CD4-positive, alpha-beta memory T cell (primary cell): ENCODE measurements at regions of chr6 and their contacts with region 1.

Region 1: GRCh38 chr6:25788305-25788922 is 33.9 kb downstream of the SLC17A4 start:
- DNase-seq: peak; percentile 11 to 40 (median 37)
- H3K4me3 ChIP-seq: no peak overlapping the region
- H3K4me3 Mint-ChIP-seq: no peak overlapping the region
- H3K27ac ChIP-seq: no peak overlapping the region
- H3K27ac Mint-ChIP-seq: no peak overlapping the region
- H3K4me1 ChIP-seq: no peaks in the 10 kb centered on the region
- H3K4me1 Mint-ChIP-seq: peaks cover 0 to 3% (median 0%) of the 10 kb centered on the region in 4 donors
- H3K27me3 ChIP-seq: no peaks in the 10 kb centered on the region
- H3K27me3 Mint-ChIP-seq: peaks cover 0 to under 1% of the 10 kb centered on the region in 2 donors

Region 2: GRCh38 chr6:25564943-25565342 is 223.5 kb before region 1 on chr6:
- CTCF ChIA-PET with region 1: no interaction called
- POLR2A ChIA-PET with region 1: no interaction called
- intact Hi-C with region 1: no loop called
- DNase-seq: no peak
- H3K4me3 ChIP-seq: no peak overlapping the region
- H3K4me3 Mint-ChIP-seq: no peak overlapping the region
- H3K27ac ChIP-seq: no peak overlapping the region
- H3K27ac Mint-ChIP-seq: no peak overlapping the region
- H3K4me1 ChIP-seq: no peaks in the 10 kb centered on the region
- H3K4me1 Mint-ChIP-seq: no peaks in the 10 kb centered on the region
- H3K27me3 ChIP-seq: no peaks in the 10 kb centered on the region
- H3K27me3 Mint-ChIP-seq: no peaks in the 10 kb centered on the region

Region 3: GRCh38 chr6:25874822-25875562 is 86.6 kb after region 1 on chr6:
- CTCF ChIA-PET with region 1: interaction called, 84 read pairs
- POLR2A ChIA-PET with region 1: no interaction called
- intact Hi-C with region 1: no loop called
- DNase-seq: peak in 4 of 5 donors; percentile 19 to 33 (median 29)
- H3K4me3 ChIP-seq: no peak overlapping the region
- H3K4me3 Mint-ChIP-seq: peak overlapping the region in 6 of 8 donors; percentile 5 to 44 (median 26)
- H3K27ac ChIP-seq: no peak overlapping the region
- H3K27ac Mint-ChIP-seq: peak overlapping the region in 6 of 7 donors; percentile 0 to 86 (median 74)
- H3K4me1 ChIP-seq: peaks cover 35% of the 10 kb centered on the region
- H3K4me1 Mint-ChIP-seq: peaks cover 19 to 44% (median 35%) of the 10 kb centered on the region in 4 donors
- H3K27me3 ChIP-seq: no peaks in the 10 kb centered on the region
- H3K27me3 Mint-ChIP-seq: no peaks in the 10 kb centered on the region

Region 4: DNA sequence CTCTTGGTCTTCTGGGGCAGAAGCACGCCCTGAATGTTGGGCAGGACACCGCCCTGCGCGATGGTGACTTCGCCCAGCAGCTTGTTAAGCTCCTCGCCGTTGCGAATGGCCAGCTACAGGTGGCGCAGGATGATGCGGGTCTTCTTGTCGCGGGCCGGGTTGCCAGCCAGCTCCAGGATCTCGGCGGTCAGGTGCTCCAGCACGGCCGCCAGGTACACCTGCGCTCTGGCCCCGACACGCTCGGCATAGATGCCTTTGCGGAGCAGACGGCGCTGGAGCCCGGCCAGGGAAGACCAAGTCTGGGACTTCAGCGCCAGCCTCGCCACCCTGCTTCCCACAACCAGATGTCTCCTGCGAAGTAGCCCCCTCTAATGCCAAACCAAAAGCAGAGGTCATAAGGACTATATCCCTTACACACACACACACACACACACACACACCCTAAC is 93.7 kb after region 1 on chr6:
- CTCF ChIA-PET with region 1: interaction called, 84 read pairs
- POLR2A ChIA-PET with region 1: interaction called, 3 read pairs
- intact Hi-C with region 1: loop called (anchors 1 kb)
- DNase-seq: peak in 3 of 5 donors; percentile 45 to 73 (median 63)
- H3K4me3 ChIP-seq: peak overlapping the region in 1 of 2 donors; percentile 44
- H3K4me3 Mint-ChIP-seq: peak overlapping the region in 5 of 8 donors; percentile 86 to 94 (median 90)
- H3K27ac ChIP-seq: peak overlapping the region; percentile 31
- H3K27ac Mint-ChIP-seq: peak overlapping the region in 5 of 7 donors; percentile 63 to 97 (median 91)
- H3K4me1 ChIP-seq: no peaks in the 10 kb centered on the region
- H3K4me1 Mint-ChIP-seq: peaks cover under 1 to 8% (median 4%) of the 10 kb centered on the region in 4 donors
- H3K27me3 ChIP-seq: no peaks in the 10 kb centered on the region
- H3K27me3 Mint-ChIP-seq: peaks cover 0 to 2% of the 10 kb centered on the region in 2 donors

Region 5: DNA sequence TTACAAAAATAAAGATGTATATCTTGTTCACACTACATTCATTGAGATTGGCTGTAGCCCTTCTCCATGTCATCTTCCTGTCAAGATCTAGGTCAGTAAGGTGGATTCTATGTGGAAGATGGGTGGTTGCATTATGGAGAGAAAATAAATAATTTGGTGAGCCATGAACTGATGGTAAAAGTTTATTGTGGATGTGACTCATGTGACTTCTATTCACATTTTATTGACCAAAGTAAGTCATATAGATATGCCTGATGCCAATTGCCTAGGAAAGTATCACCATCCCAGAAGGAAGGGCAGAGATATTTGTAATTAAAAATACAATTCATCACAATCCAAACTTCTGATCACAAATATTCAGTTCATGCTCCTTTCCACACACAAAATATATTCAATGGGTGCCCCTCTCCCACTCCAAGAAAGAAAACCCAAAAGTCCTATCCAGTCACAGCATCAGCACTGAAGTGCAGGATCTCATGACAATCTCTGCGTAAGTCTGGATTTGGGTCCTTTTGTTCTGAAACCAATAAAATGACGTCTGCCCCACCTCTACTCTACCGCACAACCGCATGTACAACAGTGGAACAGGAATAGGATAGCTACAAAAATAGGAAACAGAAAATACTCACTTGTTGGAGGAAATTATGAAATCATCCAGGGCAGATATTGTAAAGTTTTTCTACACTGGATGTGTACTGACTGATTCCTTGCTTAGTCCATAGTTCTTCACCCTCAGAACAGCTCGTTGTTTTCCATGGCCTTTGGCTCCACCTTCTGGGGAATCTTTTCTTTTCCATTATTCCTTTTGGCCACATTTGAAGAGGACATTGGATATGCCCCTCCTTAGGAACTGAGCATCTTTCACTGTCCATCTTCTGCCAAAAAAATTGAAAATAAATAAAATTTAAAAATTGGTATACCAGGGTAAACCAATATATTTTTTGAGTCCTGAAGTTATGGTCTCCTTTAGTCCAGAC is 101.8 kb after region 1 on chr6:
- CTCF ChIA-PET with region 1: interaction called, 12 read pairs
- POLR2A ChIA-PET with region 1: no interaction called
- intact Hi-C with region 1: loop called (anchors 1 kb)
- DNase-seq: peak in 4 of 5 donors; percentile 34 to 42 (median 40)
- H3K4me3 ChIP-seq: no peak overlapping the region
- H3K4me3 Mint-ChIP-seq: no peak overlapping the region
- H3K27ac ChIP-seq: no peak overlapping the region
- H3K27ac Mint-ChIP-seq: peak overlapping the region in 1 of 7 donors; percentile 43
- H3K4me1 ChIP-seq: no peaks in the 10 kb centered on the region
- H3K4me1 Mint-ChIP-seq: no peaks in the 10 kb centered on the region
- H3K27me3 ChIP-seq: no peaks in the 10 kb centered on the region
- H3K27me3 Mint-ChIP-seq: peaks cover 0 to 2% of the 10 kb centered on the region in 2 donors

Region 6: GRCh38 chr6:25942561-25943147 is 154.2 kb after region 1 on chr6:
- CTCF ChIA-PET with region 1: interaction called, 8 read pairs
- POLR2A ChIA-PET with region 1: no interaction called
- intact Hi-C with region 1: loop called (anchors 1 kb)
- DNase-seq: peak in 4 of 5 donors; percentile 27 to 40 (median 32)
- H3K4me3 ChIP-seq: no peak overlapping the region
- H3K4me3 Mint-ChIP-seq: no peak overlapping the region
- H3K27ac ChIP-seq: no peak overlapping the region
- H3K27ac Mint-ChIP-seq: no peak overlapping the region
- H3K4me1 ChIP-seq: peaks cover 9% of the 10 kb centered on the region
- H3K4me1 Mint-ChIP-seq: peaks cover 8 to 21% (median 15%) of the 10 kb centered on the region in 4 donors
- H3K27me3 ChIP-seq: no peaks in the 10 kb centered on the region
- H3K27me3 Mint-ChIP-seq: peaks cover 0 to 2% of the 10 kb centered on the region in 2 donors

Region 7: DNA sequence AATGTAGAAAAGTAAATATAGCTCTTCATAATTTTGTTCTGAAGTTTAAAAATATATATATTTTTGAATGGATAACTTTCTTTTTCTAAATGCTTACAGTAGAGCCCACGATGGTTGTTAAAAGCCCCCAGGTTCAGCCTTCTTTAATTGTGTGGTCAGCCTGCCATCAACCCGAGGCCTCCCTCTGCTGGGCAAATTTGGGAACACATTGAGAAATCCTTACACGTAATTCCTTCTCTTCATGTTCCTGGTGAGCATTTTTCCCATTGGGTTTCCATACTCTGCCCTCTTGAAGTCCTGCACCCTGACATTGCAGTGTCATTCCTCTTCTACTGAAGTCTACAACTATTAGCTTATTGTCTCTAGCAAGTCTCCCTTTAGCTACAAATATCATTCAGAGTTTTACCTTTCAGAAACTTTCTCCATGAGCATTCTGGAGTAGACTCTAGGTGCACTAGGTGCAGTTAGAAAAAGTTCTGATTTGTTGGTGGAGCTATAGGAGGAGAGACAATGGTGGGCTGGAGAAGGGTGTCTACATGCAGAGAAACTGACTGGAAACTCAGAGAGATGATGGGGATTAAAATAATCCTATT is 214.8 kb after region 1 on chr6:
- CTCF ChIA-PET with region 1: interaction called, 21 read pairs
- POLR2A ChIA-PET with region 1: no interaction called
- intact Hi-C with region 1: no loop called
- DNase-seq: peak; percentile 21 to 48 (median 37)
- H3K4me3 ChIP-seq: no peak overlapping the region
- H3K4me3 Mint-ChIP-seq: no peak overlapping the region
- H3K27ac ChIP-seq: no peak overlapping the region
- H3K27ac Mint-ChIP-seq: peak overlapping the region in 1 of 7 donors; percentile 59
- H3K4me1 ChIP-seq: peaks cover 4% of the 10 kb centered on the region
- H3K4me1 Mint-ChIP-seq: peaks cover 0 to 6% (median 5%) of the 10 kb centered on the region in 4 donors
- H3K27me3 ChIP-seq: no peaks in the 10 kb centered on the region
- H3K27me3 Mint-ChIP-seq: no peaks in the 10 kb centered on the region